ENCODE measurements at regions of chr4 and their contacts with region 1.

Region 1: DNA sequence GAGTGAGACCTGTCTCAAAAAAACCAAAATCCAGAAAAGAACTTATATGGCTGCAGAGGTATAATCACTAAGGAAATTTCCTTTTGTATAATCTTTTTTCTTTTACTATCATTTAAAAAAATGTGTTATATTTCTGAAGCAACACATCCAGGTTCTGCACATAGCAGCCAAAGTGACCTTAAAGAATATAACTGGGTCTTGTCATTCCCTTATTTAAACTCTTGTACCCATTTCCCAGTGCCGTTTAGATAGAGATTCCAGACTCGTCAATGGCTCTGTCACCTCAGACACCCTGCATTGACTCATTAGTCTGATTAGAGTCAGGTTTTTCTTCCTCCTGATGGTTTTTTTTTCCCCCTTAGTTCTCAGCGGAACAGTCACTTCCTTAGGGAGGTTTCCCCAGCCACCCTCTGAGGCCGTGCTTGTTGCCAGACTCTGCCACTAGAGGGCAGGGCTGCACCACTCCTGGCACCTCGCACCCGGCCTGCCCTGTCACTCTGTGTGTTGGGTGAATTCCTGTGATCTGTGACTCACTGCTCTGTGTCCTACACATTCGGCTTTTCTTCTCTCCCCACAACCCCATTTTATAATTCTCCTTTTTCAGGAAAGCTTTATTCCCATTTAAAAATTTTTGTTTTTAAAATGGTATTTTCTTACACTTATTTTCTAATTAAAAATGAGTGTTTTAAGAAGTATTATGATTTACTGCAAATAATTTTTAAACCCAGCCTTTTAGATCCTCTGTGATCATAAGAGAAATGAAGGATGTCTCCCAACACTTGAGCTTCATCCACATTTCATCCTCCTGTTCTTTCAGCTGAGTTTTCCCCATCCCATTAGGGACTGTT is 32.1 kb downstream of the HTT start:
- DNase-seq: peak; percentile 93
- H3K4me3 ChIP-seq: no peak overlapping the region
- H3K27ac ChIP-seq: peak overlapping the region; percentile 82
- H3K4me1 ChIP-seq: peaks cover 23% of the 10 kb centered on the region
- H3K27me3 ChIP-seq: no peaks in the 10 kb centered on the region
- CTCF ChIP-seq: peak; percentile 99

Region 2: DNA sequence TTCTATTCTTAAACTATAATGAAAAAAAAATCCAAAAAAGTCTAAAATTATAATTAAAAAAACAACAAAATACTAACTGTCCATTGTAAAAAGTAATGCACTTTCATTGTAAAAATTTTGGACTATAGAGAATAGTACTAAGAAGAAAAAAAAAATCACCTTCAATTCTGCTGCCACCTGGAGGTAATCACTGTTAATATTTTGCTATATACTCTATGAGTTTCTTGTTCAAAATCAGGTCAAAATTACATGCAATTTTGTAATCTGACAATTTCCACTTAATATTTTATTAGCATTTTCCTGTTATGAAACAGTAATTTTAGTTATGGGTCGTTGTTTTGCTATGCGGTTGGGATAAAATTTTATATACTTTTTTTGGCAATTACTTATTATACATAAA is 29.9 kb after region 1 on chr4:
- CTCF ChIA-PET with region 1: interaction called, 8 read pairs
- POLR2A ChIA-PET with region 1: no interaction called
- intact Hi-C with region 1: loop called (anchors 2 kb)
- DNase-seq: peak; percentile 45
- H3K4me3 ChIP-seq: no peak overlapping the region
- H3K27ac ChIP-seq: no peak overlapping the region
- H3K4me1 ChIP-seq: peaks cover 11% of the 10 kb centered on the region
- H3K27me3 ChIP-seq: no peaks in the 10 kb centered on the region
- CTCF ChIP-seq: peak; percentile 59

Region 3: GRCh38 chr4:3201718-3202702 is 95.4 kb after region 1 on chr4:
- CTCF ChIA-PET with region 1: no interaction called
- POLR2A ChIA-PET with region 1: no interaction called
- intact Hi-C with region 1: loop called (anchors 5 kb)
- DNase-seq: peak; percentile 9
- H3K4me3 ChIP-seq: no peak overlapping the region
- H3K27ac ChIP-seq: peak overlapping the region; percentile 27
- H3K4me1 ChIP-seq: peaks cover 9% of the 10 kb centered on the region
- H3K27me3 ChIP-seq: no peaks in the 10 kb centered on the region
- CTCF ChIP-seq: no peak

Region 4: GRCh38 chr4:3346146-3346545 is 239.6 kb after region 1 on chr4:
- CTCF ChIA-PET with region 1: no interaction called
- POLR2A ChIA-PET with region 1: no interaction called
- intact Hi-C with region 1: loop called (anchors 5 kb)
- DNase-seq: peak; percentile 87
- H3K4me3 ChIP-seq: no peak overlapping the region
- H3K27ac ChIP-seq: peak overlapping the region; percentile 6
- H3K4me1 ChIP-seq: peaks cover 49% of the 10 kb centered on the region
- H3K27me3 ChIP-seq: no peaks in the 10 kb centered on the region
- CTCF ChIP-seq: peak; percentile 88

Region 5: DNA sequence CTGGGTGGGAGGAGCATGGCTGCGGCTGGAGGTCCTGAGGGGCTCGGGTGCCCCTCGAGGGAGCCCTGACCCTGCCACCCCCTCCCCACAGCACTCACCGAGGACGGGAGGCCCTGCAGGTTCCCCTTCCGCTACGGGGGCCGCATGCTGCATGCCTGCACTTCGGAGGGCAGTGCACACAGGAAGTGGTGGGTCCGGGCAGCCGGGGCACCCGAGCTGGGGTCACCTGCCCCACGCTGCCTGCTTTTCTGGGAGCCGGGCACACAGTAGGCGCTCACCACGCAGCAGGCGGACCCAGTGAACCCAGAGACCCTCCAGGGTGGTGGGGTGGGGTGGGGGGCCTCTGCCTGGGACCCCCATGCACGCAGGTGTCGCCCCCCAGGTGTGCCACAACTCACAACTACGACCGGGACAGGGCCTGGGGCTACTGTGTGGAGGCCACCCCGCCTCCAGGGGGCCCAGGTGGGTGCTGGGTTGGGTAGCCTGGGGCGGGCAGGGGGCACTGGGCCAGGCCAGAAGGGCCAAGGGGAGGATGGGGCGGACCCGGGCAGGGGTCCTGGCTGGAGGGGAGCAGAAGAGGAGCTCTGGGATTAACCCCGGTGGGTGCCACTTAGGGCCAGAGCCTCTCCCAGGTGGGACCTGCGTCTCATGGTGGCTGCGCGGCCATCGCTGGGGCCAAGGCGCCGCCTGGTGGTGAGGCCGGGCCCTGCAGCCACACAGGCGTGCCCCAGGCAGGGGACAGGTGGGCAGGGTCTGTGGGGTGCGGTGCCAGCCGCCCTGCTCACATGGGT is 336.6 kb after region 1 on chr4:
- CTCF ChIA-PET with region 1: no interaction called
- POLR2A ChIA-PET with region 1: no interaction called
- intact Hi-C with region 1: loop called (anchors 5 kb)
- DNase-seq: peak; percentile 70
- H3K4me3 ChIP-seq: no peak overlapping the region
- H3K27ac ChIP-seq: no peak overlapping the region
- H3K4me1 ChIP-seq: no peaks in the 10 kb centered on the region
- H3K27me3 ChIP-seq: no peaks in the 10 kb centered on the region
- CTCF ChIP-seq: peak; percentile 96

Region 6: GRCh38 chr4:3480528-3481112 is 374.1 kb after region 1 on chr4:
- CTCF ChIA-PET with region 1: no interaction called
- POLR2A ChIA-PET with region 1: no interaction called
- intact Hi-C with region 1: loop called (anchors 5 kb)
- DNase-seq: peak; percentile 77
- H3K4me3 ChIP-seq: no peak overlapping the region
- H3K27ac ChIP-seq: no peak overlapping the region
- H3K4me1 ChIP-seq: no peaks in the 10 kb centered on the region
- H3K27me3 ChIP-seq: peaks cover 27% of the 10 kb centered on the region
- CTCF ChIP-seq: peak; percentile 97